ENCODE measurements at regions of chr17 and their contacts with region 1.

Region 1: DNA sequence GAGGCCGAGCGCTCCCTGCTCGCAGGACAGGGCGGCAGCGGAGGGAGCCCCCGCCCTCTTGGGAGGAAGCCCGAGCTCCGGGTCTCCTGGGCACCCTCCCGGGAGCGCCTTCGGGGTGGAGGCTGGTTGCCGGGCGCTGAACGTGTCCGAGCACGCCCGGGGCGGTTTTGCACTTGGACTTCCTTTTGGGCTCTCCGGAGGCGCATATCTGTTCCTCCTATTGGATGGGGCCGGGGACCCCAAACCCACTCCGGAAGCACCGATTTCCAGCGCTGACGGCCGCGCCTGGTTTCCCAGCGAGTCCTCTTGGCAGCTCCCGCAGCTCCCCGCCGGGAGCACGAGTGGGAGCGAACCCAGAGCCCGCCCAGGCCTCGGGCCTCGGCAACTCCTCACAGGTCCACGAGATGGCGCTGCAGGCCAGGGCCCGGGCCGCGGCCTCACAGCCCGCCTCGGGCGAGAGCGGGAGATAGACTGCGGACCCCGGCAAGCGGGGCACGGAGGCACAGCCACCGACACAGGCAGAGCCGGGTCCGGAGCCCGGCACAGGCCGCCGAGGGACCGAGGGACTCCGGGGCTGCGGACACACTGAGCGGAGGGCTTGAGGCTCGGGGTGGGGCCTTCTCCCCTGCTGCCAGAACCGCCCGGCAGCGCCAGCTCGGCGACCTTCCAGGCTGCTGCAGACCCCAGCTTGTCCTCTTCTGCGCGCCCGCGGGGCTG is 12.7 kb downstream of the TBX2 start:
- DNase-seq: peak; percentile 5
- ATAC-seq: peak; percentile 83
- H3K4me3 ChIP-seq: peak overlapping the region; percentile 54; the same call in 1 of the 2 replicates
- H3K27ac ChIP-seq: no peak overlapping the region
- H3K4me1 ChIP-seq: peaks cover 4% of the 10 kb centered on the region; the same call in 1 of the 2 replicates
- H3K27me3 ChIP-seq: peaks cover 17 to 34% of the 10 kb centered on the region in 2 experiments
- CTCF ChIP-seq: peak; percentile 83 to 94 (median 87)
- EP300 ChIP-seq: no peak
- POLR2A ChIP-seq: no peak
- RAD21 ChIP-seq: peak; percentile 89

Region 2: DNA sequence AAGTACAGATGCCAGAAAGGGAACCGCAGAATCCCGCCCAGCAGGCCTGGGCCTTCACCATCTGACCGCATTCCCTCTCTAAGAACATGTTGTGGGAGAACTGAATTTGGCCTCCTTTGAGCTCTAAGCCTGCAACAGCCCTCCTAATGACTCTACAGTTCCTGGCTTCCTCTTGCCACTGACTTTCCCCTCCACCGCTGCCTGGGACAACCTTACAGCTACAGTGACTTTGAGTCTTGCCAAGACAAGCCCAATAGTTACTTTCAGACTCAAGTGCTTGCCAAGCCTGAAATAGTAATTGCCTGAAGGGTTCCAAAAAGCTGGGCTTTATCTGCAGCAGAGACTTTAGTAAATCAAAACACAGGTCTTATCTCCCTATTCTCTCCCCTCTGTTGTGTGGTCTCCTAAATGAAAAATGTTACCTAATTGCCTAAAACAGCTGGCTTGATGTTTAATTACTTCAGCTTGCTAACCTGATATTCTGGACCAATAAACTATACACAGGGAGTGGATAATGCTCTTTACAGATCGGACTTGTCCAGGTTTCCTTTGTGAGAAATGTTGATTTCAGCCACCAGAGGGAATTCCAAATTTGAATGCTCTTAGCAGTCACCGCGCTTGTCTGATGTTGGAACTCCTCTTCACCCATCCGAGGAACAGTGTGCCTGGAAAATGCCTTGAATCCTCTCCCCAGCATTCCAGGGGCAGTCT is 97.8 kb before region 1 on chr17:
- CTCF ChIA-PET with region 1: no interaction called
- POLR2A ChIA-PET with region 1: no interaction called
- RAD21 ChIA-PET with region 1: no interaction called
- SMC1A ChIA-PET with region 1: no interaction called
- in situ Hi-C with region 1: no loop called
- intact Hi-C with region 1: no loop called
- DNase-seq: no peak
- ATAC-seq: no peak
- H3K4me3 ChIP-seq: no peak overlapping the region
- H3K27ac ChIP-seq: no peak overlapping the region
- H3K4me1 ChIP-seq: no peaks in the 10 kb centered on the region
- H3K27me3 ChIP-seq: no peaks in the 10 kb centered on the region
- CTCF ChIP-seq: no peak
- EP300 ChIP-seq: no peak
- POLR2A ChIP-seq: no peak
- RAD21 ChIP-seq: no peak

Region 3: DNA sequence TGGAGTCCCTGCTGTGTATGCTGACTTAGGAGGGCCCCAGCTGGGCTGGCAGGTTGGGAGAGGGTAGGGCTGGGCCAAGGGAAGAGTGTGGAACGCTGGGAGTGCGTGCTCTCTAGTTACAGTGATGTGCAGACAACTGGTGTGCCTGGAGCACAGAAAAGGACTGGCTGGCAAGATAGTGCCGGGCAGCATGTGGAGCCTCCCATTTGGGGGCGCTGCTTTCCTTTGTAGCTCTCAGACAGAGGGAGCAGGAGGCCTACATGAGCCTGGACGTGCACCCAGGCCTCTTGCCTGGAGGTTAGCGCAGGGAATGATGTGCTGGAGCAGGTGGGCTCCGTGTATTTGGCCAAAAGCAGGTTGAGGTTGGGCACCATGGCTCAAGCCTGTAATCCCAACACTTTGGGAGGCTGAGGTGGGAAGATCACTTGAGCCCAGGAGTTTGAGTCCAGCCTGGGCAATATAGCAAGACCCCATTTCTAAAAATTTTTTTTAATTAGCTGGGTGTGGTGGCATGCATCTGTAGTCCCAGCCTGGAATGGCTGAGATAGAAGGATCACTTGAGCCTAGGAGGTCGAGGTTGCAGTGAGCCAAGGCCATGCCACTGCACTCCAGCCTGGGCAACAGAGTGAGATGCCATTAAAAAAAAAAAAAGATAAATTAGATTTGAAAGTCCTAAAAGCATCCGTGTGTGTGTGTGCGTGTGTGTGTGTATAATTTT is 13.9 kb after region 1 on chr17:
- CTCF ChIA-PET with region 1: interaction called, 11 read pairs
- POLR2A ChIA-PET with region 1: no interaction called
- RAD21 ChIA-PET with region 1: no interaction called
- SMC1A ChIA-PET with region 1: interaction called, 3 read pairs
- in situ Hi-C with region 1: no loop called
- intact Hi-C with region 1: no loop called
- DNase-seq: no peak
- ATAC-seq: no peak
- H3K4me3 ChIP-seq: no peak overlapping the region
- H3K27ac ChIP-seq: no peak overlapping the region
- H3K4me1 ChIP-seq: no peaks in the 10 kb centered on the region
- H3K27me3 ChIP-seq: no peaks in the 10 kb centered on the region; a peak in 3 of 4 replicates
- CTCF ChIP-seq: no peak
- EP300 ChIP-seq: no peak
- POLR2A ChIP-seq: no peak
- RAD21 ChIP-seq: no peak

Measured in GM12878 (cell line).